GM12878 (cell line): ENCODE measurements at regions of chr20 and their contacts with region 1.

Region 1: DNA sequence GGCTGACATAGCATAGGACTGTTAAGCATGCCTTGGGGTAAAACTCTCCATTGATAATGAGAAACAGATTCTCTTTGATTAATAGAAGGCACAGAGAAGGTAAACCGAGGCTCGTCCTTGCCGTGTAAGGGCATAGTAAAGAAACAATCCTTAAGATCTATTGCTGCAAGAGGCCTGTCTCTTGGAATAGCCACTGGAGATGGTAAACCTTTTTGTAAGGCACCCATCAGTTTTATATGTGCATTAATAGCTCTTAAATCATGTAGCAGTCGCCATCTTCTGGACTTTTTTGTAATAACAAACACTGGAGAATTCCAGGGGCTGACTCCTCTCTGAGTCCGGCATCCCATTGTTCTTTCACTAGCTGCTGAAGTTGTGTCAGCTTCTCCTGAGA is 8.4 kb upstream of the ABHD12 start:
- DNase-seq: no peak
- ATAC-seq: peak; percentile 91
- H3K4me3 ChIP-seq: no peak overlapping the region
- H3K27ac ChIP-seq: no peak overlapping the region
- H3K4me1 ChIP-seq: peaks cover 6% of the 10 kb centered on the region; the same call in 1 of the 2 replicates
- H3K27me3 ChIP-seq: no peaks in the 10 kb centered on the region
- CTCF ChIP-seq: peak; percentile 44 to 64 (median 48); a peak in 5 of 6 replicates
- EP300 ChIP-seq: no peak
- POLR2A ChIP-seq: no peak
- RAD21 ChIP-seq: peak; percentile 88

Region 2: GRCh38 chr20:25065625-25066338 is 333.3 kb before region 1 on chr20:
- CTCF ChIA-PET with region 1: interaction called, 4 read pairs
- POLR2A ChIA-PET with region 1: no interaction called
- RAD21 ChIA-PET with region 1: no interaction called
- SMC1A ChIA-PET with region 1: interaction called, 5 read pairs
- in situ Hi-C with region 1: no loop called
- intact Hi-C with region 1: loop called (anchors 5 kb)
- DNase-seq: peak; percentile 42
- ATAC-seq: peak; percentile 93
- H3K4me3 ChIP-seq: no peak overlapping the region
- H3K27ac ChIP-seq: no peak overlapping the region
- H3K4me1 ChIP-seq: no peaks in the 10 kb centered on the region
- H3K27me3 ChIP-seq: peaks cover 0 to under 1% of the 10 kb centered on the region in 2 experiments; a peak in 2 of 4 replicates
- CTCF ChIP-seq: peak; percentile 61 to 83 (median 74); a peak in 5 of 6 replicates
- EP300 ChIP-seq: no peak
- POLR2A ChIP-seq: no peak
- RAD21 ChIP-seq: peak; percentile 93

Region 3: GRCh38 chr20:25247956-25248785 is 150.9 kb before region 1 on chr20 and contains the start of gene PYGB:
- CTCF ChIA-PET with region 1: interaction called, 18 read pairs
- POLR2A ChIA-PET with region 1: no interaction called
- RAD21 ChIA-PET with region 1: interaction called, 7 read pairs
- SMC1A ChIA-PET with region 1: interaction called, 8 read pairs
- in situ Hi-C with region 1: no loop called
- intact Hi-C with region 1: loop called (anchors 5 kb)
- DNase-seq: peak; percentile 41
- ATAC-seq: peak; percentile 80
- H3K4me3 ChIP-seq: peak within 1 kb of the TSS; percentile 91
- H3K27ac ChIP-seq: peak within 1 kb of the TSS; percentile 66
- H3K4me1 ChIP-seq: peaks cover 28% of the 10 kb centered on the region
- H3K27me3 ChIP-seq: no peaks in the 10 kb centered on the region
- CTCF ChIP-seq: no peak
- EP300 ChIP-seq: no peak
- POLR2A ChIP-seq: peak; percentile 93
- RAD21 ChIP-seq: no peak
- polyA plus RNA-seq, gene PYGB: 0.34 to 1.3 TPM

Region 4: DNA sequence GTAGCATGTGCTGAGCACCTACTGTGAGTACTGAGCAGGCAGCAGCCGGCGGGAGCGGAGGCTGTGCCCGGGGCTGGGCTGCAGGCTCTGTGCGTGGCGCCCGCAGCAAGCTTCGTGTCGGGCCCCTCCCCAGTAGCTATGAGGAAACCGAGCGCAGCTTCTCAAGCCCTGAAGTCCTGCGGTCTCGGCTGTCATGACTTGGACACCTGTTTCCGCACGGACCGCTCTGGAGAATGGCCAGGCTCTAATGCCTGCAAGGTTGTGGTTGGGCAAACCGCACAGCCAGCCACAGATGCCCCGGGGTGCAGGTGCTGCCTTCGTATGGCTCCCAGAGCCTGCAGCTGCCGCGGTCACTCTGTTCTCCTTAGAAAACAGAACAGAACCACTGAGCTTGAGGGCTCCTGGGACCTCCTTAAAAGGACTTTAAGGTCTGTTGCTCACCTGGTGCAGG is 117.5 kb before region 1 on chr20:
- CTCF ChIA-PET with region 1: interaction called, 11 read pairs
- POLR2A ChIA-PET with region 1: no interaction called
- RAD21 ChIA-PET with region 1: interaction called, 3 read pairs
- SMC1A ChIA-PET with region 1: interaction called, 9 read pairs
- in situ Hi-C with region 1: no loop called
- intact Hi-C with region 1: no loop called
- DNase-seq: peak; percentile 64
- ATAC-seq: peak; percentile 84
- H3K4me3 ChIP-seq: no peak overlapping the region
- H3K27ac ChIP-seq: peak overlapping the region; percentile 50
- H3K4me1 ChIP-seq: peaks cover 26% of the 10 kb centered on the region
- H3K27me3 ChIP-seq: no peaks in the 10 kb centered on the region
- CTCF ChIP-seq: no peak
- EP300 ChIP-seq: peak in 1 of 2 experiments; percentile 62; a peak in 2 of 4 replicates
- POLR2A ChIP-seq: no peak; the same call in 1 of the 2 replicates
- RAD21 ChIP-seq: no peak

Region 5: GRCh38 chr20:25294459-25295385 is 104.3 kb before region 1 on chr20:
- CTCF ChIA-PET with region 1: interaction called, 95 read pairs
- POLR2A ChIA-PET with region 1: no interaction called
- RAD21 ChIA-PET with region 1: interaction called, 59 read pairs
- SMC1A ChIA-PET with region 1: interaction called, 53 read pairs
- in situ Hi-C with region 1: loop called (anchors 5 kb)
- intact Hi-C with region 1: loop called (anchors 1 kb)
- DNase-seq: no peak
- ATAC-seq: peak; percentile 70
- H3K4me3 ChIP-seq: no peak overlapping the region
- H3K27ac ChIP-seq: no peak overlapping the region
- H3K4me1 ChIP-seq: peaks cover 39% of the 10 kb centered on the region
- H3K27me3 ChIP-seq: no peaks in the 10 kb centered on the region
- CTCF ChIP-seq: peak; percentile 90 to 95 (median 93)
- EP300 ChIP-seq: no peak
- POLR2A ChIP-seq: peak; percentile 53; the same call in 1 of the 2 replicates
- RAD21 ChIP-seq: peak; percentile 71

Region 6: DNA sequence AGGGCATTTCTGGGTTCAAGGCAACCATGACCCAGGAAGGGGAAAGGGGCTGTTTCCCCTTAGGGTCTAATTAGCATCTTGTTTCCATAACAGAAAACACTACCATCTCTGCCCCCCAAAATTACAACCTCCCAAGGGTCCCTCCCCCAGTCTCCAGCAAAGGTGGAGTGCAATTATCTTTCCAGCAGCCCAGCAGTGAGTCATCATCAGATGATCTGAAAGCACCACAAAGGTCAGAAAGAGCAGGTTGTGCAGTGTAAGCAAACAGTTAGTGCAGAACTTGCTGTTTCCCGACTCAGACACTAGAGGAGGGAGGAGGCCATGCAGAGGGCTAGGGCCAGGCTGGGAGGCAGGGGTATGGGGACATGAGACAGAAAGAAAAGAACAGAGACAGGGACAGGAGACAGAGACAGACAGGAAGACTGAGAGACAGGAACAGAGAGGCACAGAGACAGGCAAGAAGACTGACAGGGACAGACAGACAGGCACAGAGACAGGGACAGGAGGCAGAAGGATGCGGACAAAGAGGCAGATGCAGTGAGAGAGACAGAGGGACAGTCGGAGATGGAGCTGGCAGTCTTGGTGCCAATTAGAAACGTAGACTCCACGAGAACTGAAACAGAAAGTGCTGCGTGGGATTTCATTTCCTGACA is 88.6 kb before region 1 on chr20:
- CTCF ChIA-PET with region 1: interaction called, 23 read pairs
- POLR2A ChIA-PET with region 1: no interaction called
- RAD21 ChIA-PET with region 1: interaction called, 29 read pairs
- SMC1A ChIA-PET with region 1: interaction called, 39 read pairs
- in situ Hi-C with region 1: no loop called
- intact Hi-C with region 1: no loop called
- DNase-seq: peak; percentile 67
- ATAC-seq: peak; percentile 97
- H3K4me3 ChIP-seq: peak overlapping the region; percentile 55; the same call in 1 of the 2 replicates
- H3K27ac ChIP-seq: peak overlapping the region; percentile 92
- H3K4me1 ChIP-seq: peaks cover 33% of the 10 kb centered on the region
- H3K27me3 ChIP-seq: no peaks in the 10 kb centered on the region
- CTCF ChIP-seq: peak; percentile 75 to 96 (median 84)
- EP300 ChIP-seq: peak; percentile 30 to 55; a peak in 2 of 4 replicates
- POLR2A ChIP-seq: peak; percentile 40; the same call in 1 of the 2 replicates
- RAD21 ChIP-seq: peak; percentile 91